ENCODE measurements at regions of chr10 and their contacts with region 1.

Region 1: GRCh38 chr10:93376372-93377293 is 105.5 kb downstream of the MYOF start:
- DNase-seq: peak; percentile 18 to 25
- ATAC-seq: peak; percentile 90 to 91
- H3K4me3 ChIP-seq: no peak overlapping the region
- H3K27ac ChIP-seq: peak overlapping the region; percentile 24 to 53 (median 40)
- H3K4me1 ChIP-seq: no peaks in the 10 kb centered on the region
- H3K27me3 ChIP-seq: no peaks in the 10 kb centered on the region
- CTCF ChIP-seq: peak; percentile 84 to 93 (median 90)
- POLR2A ChIP-seq: no peak

Region 2: DNA sequence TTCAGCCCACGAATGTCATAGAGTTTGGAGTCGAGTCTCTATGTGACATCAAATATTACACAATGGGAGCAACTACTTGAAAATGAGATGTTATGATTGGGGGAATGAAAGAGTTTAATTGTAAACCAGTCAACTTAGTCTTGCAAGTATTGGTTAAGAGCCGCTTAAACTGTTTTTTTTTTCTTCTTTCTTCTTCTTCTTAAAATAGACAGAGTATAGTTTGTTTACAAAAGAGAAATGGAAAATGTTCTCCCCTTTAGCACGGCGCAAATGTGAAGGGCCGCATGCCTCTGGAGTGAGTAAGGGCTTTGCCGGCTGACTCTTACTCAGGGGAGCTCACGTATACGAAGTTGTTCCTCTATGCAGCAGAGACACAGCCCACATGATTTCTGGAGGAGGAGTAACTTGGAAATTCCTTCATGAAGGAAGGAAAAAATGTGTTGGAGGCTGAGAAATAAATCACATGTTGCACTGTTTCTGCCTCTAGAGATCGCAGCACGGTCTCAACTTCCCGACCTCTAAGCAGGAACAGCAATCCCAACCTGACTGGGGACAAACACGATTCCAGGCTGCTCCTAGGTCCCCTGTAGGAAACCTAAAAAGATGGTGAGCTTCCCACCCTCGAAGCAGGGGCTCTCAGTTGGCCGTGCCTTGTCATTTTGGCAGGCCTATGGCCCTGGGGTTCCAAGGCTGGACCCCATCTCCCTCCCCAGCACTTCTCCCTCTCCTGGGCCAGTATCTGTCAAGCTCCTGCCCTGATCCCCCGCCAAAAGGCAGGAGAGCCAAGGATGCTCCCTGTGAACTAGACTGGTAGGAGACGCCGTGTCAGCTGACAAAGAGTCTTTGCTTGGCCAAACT is 60.7 kb after region 1 on chr10:
- in situ Hi-C with region 1: no loop called
- intact Hi-C with region 1: loop called (anchors 5 kb)
- DNase-seq: peak; percentile 84 to 87
- ATAC-seq: peak; percentile 95 to 97
- H3K4me3 ChIP-seq: peak overlapping the region; percentile 12 to 46 (median 35)
- H3K27ac ChIP-seq: peak overlapping the region; percentile 83 to 94 (median 92)
- H3K4me1 ChIP-seq: peaks cover 29 to 43% of the 10 kb centered on the region in 2 donors
- H3K27me3 ChIP-seq: no peaks in the 10 kb centered on the region
- CTCF ChIP-seq: no peak
- POLR2A ChIP-seq: peak in 1 of 2 donors; percentile 32

Region 3: DNA sequence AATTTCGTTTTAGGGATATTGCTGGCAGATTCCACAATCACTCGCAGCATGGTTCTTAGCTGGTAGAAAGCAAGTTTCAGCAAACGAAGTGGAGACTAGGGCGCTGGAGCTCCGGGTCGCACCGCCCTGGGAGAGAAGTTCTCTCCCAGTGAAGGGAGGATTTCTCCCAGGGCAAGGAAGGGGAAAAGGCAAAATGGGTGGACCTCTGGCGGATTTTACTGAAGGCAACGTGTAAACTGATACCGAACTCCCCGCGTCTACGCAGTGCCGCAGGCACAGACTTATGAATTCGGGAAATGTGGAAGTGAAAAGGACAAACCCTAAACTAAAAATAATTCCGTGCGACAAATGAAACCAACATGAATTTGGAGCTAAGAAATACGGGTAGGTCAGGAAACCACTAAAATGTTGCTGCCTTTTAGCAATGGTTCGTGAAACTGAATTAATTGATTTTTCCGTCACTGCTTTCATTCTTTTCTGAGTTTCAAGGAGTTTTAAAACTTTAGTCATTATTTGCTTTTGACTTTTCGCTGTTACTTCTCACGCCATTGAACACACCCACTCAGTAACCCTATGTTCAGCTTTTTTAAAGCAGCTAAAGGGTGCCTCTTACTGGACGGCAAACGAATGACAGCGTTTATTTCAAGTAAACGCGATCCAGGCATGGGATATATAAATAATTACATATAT is 105.7 kb after region 1 on chr10 and contains the start of gene MYOF:
- in situ Hi-C with region 1: loop called (anchors 5 kb)
- intact Hi-C with region 1: loop called (anchors 1 kb)
- DNase-seq: peak in 1 of 2 donors; percentile 28
- ATAC-seq: peak; percentile 90
- H3K4me3 ChIP-seq: peak within 1 kb of the TSS; percentile 63 to 92 (median 65)
- H3K27ac ChIP-seq: peak within 1 kb of the TSS; percentile 64 to 80 (median 72)
- H3K4me1 ChIP-seq: peaks cover 0 to 9% of the 10 kb centered on the region in 2 donors
- H3K27me3 ChIP-seq: peaks cover 0 to 14% (median 0%) of the 10 kb centered on the region in 3 donors
- CTCF ChIP-seq: peak in 4 of 5 experiments; percentile 27 to 64 (median 53)
- POLR2A ChIP-seq: peak; percentile 28 to 60
- total RNA-seq, gene MYOF: 4.1 to 10.3 (median 6.3) TPM

Region 4: GRCh38 chr10:93515071-93516005 is 138.7 kb after region 1 on chr10:
- in situ Hi-C with region 1: no loop called
- intact Hi-C with region 1: loop called (anchors 1 kb)
- DNase-seq: no peak
- ATAC-seq: peak; percentile 15 to 64
- H3K4me3 ChIP-seq: peak overlapping the region in 1 of 4 donors; percentile 26
- H3K27ac ChIP-seq: peak overlapping the region in 2 of 4 donors; percentile 69 to 73
- H3K4me1 ChIP-seq: peaks cover 0 to 31% of the 10 kb centered on the region in 2 donors
- H3K27me3 ChIP-seq: no peaks in the 10 kb centered on the region
- CTCF ChIP-seq: no peak
- POLR2A ChIP-seq: no peak

Region 5: DNA sequence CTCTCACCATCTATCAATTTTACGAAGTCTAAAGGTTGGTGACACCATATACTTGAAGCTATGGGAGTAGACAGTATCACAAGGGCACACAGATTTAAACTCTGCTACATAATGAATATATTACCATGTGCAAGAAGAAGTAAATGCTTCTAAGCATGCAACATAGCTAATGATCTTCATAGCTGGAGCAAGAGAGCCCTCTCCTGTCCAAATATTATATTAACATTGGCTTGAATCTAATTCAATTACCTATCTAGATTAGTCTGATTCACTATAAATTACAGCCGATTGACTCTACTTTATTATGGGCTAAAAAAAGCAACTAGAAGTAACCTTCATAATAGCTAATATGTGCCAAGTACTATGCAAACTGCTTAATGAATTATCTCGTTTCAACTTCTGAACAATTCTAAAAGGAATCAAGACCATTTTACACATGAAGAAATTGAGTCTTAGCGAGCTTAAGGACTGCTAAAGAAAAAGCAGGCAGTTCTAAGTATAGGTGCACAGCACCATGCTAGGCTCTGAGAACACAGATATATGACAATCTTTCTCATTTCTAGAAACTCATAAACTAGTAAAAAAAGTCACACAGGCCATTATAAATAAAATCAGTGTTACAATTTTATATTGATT is 303.9 kb after region 1 on chr10:
- in situ Hi-C with region 1: loop called in 1 of 4 experiments (anchors 25 kb)
- intact Hi-C with region 1: no loop called
- DNase-seq: no peak
- ATAC-seq: no peak
- H3K4me3 ChIP-seq: no peak overlapping the region
- H3K27ac ChIP-seq: no peak overlapping the region
- H3K4me1 ChIP-seq: no peaks in the 10 kb centered on the region
- H3K27me3 ChIP-seq: no peaks in the 10 kb centered on the region
- CTCF ChIP-seq: no peak
- POLR2A ChIP-seq: no peak

Measured in gastrocnemius medialis (tissue), 4 donors.